Naive thymus-derived CD4-positive, alpha-beta T cell (primary cell): ENCODE measurements at regions of chr7 and their contacts with region 1.

Region 1: DNA sequence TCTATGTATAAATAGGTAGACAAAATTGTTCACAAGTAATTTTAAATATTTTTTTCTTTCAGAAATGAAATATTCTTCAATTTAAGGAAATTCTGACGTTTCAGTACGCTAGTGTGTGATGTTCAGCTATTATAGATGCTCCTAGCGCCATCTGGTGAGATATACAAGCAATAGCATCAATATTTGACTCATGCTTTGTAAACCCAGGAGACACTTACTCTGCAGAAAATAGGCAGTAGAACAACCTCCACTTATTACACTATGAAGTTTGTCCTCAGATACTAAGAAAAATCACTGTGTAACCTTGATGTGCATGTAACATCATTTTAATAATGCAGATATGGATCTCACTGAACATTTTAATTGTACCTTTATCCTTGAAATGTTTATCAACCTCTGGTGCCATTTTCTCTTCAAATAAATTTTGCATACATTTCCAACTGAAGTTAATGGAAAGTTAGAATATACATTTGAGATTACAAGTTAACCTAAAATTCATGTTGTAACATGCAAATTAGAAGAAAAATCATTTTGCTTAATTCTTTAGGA is 151.5 kb upstream of the FAM3C start:
- DNase-seq: peak in 7 of 9 donors; percentile 19 to 58 (median 48)
- ATAC-seq: peak; percentile 90
- H3K4me3 ChIP-seq: no peak overlapping the region
- H3K4me3 Mint-ChIP-seq: no peak overlapping the region
- H3K27ac ChIP-seq: no peak overlapping the region
- H3K27ac Mint-ChIP-seq: no peak overlapping the region
- H3K4me1 ChIP-seq: no peaks in the 10 kb centered on the region
- H3K4me1 Mint-ChIP-seq: peaks cover 0 to 38% (median 0%) of the 10 kb centered on the region in 7 donors
- H3K27me3 ChIP-seq: no peaks in the 10 kb centered on the region
- H3K27me3 Mint-ChIP-seq: peaks cover 0 to 2% (median 0%) of the 10 kb centered on the region in 5 donors

Region 2: GRCh38 chr7:120486164-120486563 is 1061.5 kb before region 1 on chr7:
- CTCF ChIA-PET with region 1: no interaction called
- POLR2A ChIA-PET with region 1: no interaction called
- intact Hi-C with region 1: no loop called
- DNase-seq: no peak
- ATAC-seq: no peak
- H3K4me3 ChIP-seq: no peak overlapping the region
- H3K4me3 Mint-ChIP-seq: no peak overlapping the region
- H3K27ac ChIP-seq: no peak overlapping the region
- H3K27ac Mint-ChIP-seq: no peak overlapping the region
- H3K4me1 ChIP-seq: no peaks in the 10 kb centered on the region
- H3K4me1 Mint-ChIP-seq: no peaks in the 10 kb centered on the region
- H3K27me3 ChIP-seq: no peaks in the 10 kb centered on the region
- H3K27me3 Mint-ChIP-seq: no peaks in the 10 kb centered on the region

Region 3: GRCh38 chr7:120987683-120988590 is 559.7 kb before region 1 on chr7:
- CTCF ChIA-PET with region 1: no interaction called
- POLR2A ChIA-PET with region 1: no interaction called
- intact Hi-C with region 1: loop called (anchors 1 to 2 kb)
- DNase-seq: peak; percentile 73 to 88 (median 84)
- ATAC-seq: peak; percentile 100
- H3K4me3 ChIP-seq: peak overlapping the region; percentile 33
- H3K4me3 Mint-ChIP-seq: peak overlapping the region; percentile 68 to 83 (median 80)
- H3K27ac ChIP-seq: no peak overlapping the region
- H3K27ac Mint-ChIP-seq: no peak overlapping the region
- H3K4me1 ChIP-seq: peaks cover 12 to 14% of the 10 kb centered on the region in 2 donors
- H3K4me1 Mint-ChIP-seq: peaks cover 7 to 24% (median 21%) of the 10 kb centered on the region in 7 donors
- H3K27me3 ChIP-seq: peaks cover 14 to 23% of the 10 kb centered on the region in 2 donors
- H3K27me3 Mint-ChIP-seq: peaks cover 46 to 66% (median 56%) of the 10 kb centered on the region in 5 donors

Region 4: GRCh38 chr7:121138262-121138933 is 409.2 kb before region 1 on chr7:
- CTCF ChIA-PET with region 1: no interaction called
- POLR2A ChIA-PET with region 1: no interaction called
- intact Hi-C with region 1: loop called in 1 of 2 experiments (anchors 5 kb)
- DNase-seq: no peak
- ATAC-seq: no peak
- H3K4me3 ChIP-seq: no peak overlapping the region
- H3K4me3 Mint-ChIP-seq: peak overlapping the region in 2 of 10 donors; percentile 57 to 72
- H3K27ac ChIP-seq: no peak overlapping the region
- H3K27ac Mint-ChIP-seq: no peak overlapping the region
- H3K4me1 ChIP-seq: no peaks in the 10 kb centered on the region
- H3K4me1 Mint-ChIP-seq: peaks cover 0 to 13% (median 1%) of the 10 kb centered on the region in 7 donors
- H3K27me3 ChIP-seq: peaks cover 0 to 3% of the 10 kb centered on the region in 2 donors
- H3K27me3 Mint-ChIP-seq: peaks cover 5 to 21% (median 6%) of the 10 kb centered on the region in 5 donors

Region 5: GRCh38 chr7:121437456-121438127 is 110.0 kb before region 1 on chr7:
- CTCF ChIA-PET with region 1: interaction called, 4 read pairs
- POLR2A ChIA-PET with region 1: no interaction called
- intact Hi-C with region 1: loop called (anchors 1 to 2 kb)
- DNase-seq: no peak
- ATAC-seq: no peak
- H3K4me3 ChIP-seq: peak overlapping the region; percentile 50
- H3K4me3 Mint-ChIP-seq: peak overlapping the region in 9 of 10 donors; percentile 74 to 88 (median 80)
- H3K27ac ChIP-seq: peak overlapping the region; percentile 46
- H3K27ac Mint-ChIP-seq: peak overlapping the region; percentile 91 to 98 (median 96)
- H3K4me1 ChIP-seq: peaks cover 20 to 25% of the 10 kb centered on the region in 2 donors
- H3K4me1 Mint-ChIP-seq: peaks cover 12 to 53% (median 42%) of the 10 kb centered on the region in 7 donors
- H3K27me3 ChIP-seq: no peaks in the 10 kb centered on the region
- H3K27me3 Mint-ChIP-seq: no peaks in the 10 kb centered on the region

Region 6: GRCh38 chr7:121510296-121510695 is 37.3 kb before region 1 on chr7:
- CTCF ChIA-PET with region 1: no interaction called
- POLR2A ChIA-PET with region 1: no interaction called
- intact Hi-C with region 1: loop called in 1 of 2 experiments (anchors 1 kb)
- DNase-seq: peak in 6 of 9 donors; percentile 2 to 27 (median 10)
- ATAC-seq: no peak
- H3K4me3 ChIP-seq: no peak overlapping the region
- H3K4me3 Mint-ChIP-seq: no peak overlapping the region
- H3K27ac ChIP-seq: no peak overlapping the region
- H3K27ac Mint-ChIP-seq: peak overlapping the region in 1 of 9 donors; percentile 3
- H3K4me1 ChIP-seq: no peaks in the 10 kb centered on the region
- H3K4me1 Mint-ChIP-seq: no peaks in the 10 kb centered on the region
- H3K27me3 ChIP-seq: no peaks in the 10 kb centered on the region
- H3K27me3 Mint-ChIP-seq: peaks cover 0 to 13% (median 6%) of the 10 kb centered on the region in 5 donors